ENCODE measurements at regions of chr6 and their contacts with region 1.

Region 1: GRCh38 chr6:15911753-15912504 is 217.0 kb upstream of the MYLIP start:
- DNase-seq: no peak
- H3K4me3 Mint-ChIP-seq: peak overlapping the region; percentile 56
- H3K27ac Mint-ChIP-seq: peak overlapping the region; percentile 89
- H3K4me1 Mint-ChIP-seq: peaks cover 67% of the 10 kb centered on the region
- H3K27me3 Mint-ChIP-seq: no peaks in the 10 kb centered on the region

Region 2: DNA sequence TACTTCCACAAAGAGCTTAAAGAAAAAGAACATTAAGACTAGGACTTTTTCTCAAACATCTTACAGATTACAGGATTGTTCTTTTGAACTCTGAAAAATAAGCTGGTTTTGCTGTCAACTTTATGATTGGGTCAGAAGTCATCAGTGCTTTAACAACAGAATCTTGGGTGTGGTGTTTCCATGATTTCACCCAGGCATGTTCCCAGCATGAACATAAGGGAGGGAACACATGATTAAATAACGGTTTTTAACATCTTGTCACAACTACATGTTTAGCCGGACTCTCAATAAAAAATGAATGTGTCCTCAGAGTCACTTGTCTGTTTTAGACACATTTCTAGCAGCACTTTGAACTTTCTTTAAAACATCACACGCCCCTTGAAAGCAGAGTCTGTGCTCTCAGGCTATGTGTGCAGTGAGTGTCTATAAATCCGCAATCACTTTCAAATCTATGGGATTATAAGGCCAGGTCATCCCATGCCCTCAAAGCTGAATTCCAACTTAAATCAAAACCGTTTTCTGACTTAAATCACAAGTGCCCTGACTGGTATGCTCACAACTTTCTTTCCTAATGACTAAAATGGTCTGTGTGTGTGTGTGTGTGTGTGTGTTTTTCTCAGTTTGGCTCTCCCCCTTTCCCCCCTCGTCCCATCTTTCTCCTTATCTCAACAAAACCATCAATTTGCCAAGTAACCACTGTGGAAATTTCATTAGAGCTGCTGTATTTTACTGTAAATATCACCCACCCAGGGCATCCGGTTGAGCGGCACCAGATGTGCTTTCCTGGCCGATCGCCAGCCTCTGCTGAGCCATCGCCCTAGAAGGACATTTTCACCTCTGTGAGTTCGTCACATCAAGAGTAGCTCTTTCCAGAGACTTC is 32.3 kb before region 1 on chr6:
- intact Hi-C with region 1: loop called (anchors 1 kb)
- DNase-seq: peak; percentile 29
- H3K4me3 Mint-ChIP-seq: no peak overlapping the region
- H3K27ac Mint-ChIP-seq: peak overlapping the region; percentile 68
- H3K4me1 Mint-ChIP-seq: peaks cover 49% of the 10 kb centered on the region
- H3K27me3 Mint-ChIP-seq: no peaks in the 10 kb centered on the region

Region 3: DNA sequence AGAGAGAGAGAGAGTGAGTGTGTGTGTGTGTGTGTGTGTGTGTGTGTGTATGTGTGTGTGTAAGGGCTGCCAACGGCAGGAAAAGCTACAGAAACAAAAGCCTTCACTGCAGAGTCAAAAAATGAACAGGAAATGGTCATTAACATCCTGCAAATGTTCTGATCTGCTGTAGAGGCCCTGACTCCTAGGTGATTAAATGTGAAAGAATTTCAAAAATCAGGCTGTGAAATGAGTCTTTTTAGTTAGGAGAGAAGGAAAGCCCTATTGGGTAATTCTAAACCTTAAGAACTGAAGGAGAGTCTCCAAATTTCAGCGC is 50.5 kb after region 1 on chr6:
- intact Hi-C with region 1: loop called (anchors 2 kb)
- DNase-seq: peak; percentile 39
- H3K4me3 Mint-ChIP-seq: no peak overlapping the region
- H3K27ac Mint-ChIP-seq: peak overlapping the region; percentile 86
- H3K4me1 Mint-ChIP-seq: peaks cover 32% of the 10 kb centered on the region
- H3K27me3 Mint-ChIP-seq: no peaks in the 10 kb centered on the region

Region 4: DNA sequence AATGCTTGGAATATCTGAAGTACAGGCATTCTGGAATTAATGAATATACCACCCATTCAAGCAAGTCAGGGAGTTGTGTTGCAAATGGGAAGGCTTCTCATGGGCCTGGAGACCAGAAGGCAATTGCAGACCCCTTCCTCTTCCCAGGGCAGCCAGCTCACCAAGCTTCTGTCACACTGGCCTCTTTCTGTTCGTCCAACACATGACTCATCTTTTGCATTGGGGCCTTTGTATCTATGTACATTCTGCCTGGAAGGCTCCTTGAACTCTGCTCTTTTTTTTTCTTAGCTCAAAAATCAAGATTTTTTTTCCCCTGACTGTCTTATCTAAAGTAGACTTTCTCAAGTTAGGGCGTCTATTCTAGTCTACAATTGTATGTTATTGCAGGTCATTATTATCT is 84.1 kb after region 1 on chr6:
- intact Hi-C with region 1: loop called (anchors 1 kb)
- DNase-seq: no peak
- H3K4me3 Mint-ChIP-seq: no peak overlapping the region
- H3K27ac Mint-ChIP-seq: peak overlapping the region; percentile 55
- H3K4me1 Mint-ChIP-seq: peaks cover 24% of the 10 kb centered on the region
- H3K27me3 Mint-ChIP-seq: no peaks in the 10 kb centered on the region

Region 5: GRCh38 chr6:16097382-16098171 is 185.6 kb after region 1 on chr6:
- intact Hi-C with region 1: no loop called
- DNase-seq: no peak
- H3K4me3 Mint-ChIP-seq: no peak overlapping the region
- H3K27ac Mint-ChIP-seq: no peak overlapping the region
- H3K4me1 Mint-ChIP-seq: peaks cover 14% of the 10 kb centered on the region
- H3K27me3 Mint-ChIP-seq: no peaks in the 10 kb centered on the region

Region 6: DNA sequence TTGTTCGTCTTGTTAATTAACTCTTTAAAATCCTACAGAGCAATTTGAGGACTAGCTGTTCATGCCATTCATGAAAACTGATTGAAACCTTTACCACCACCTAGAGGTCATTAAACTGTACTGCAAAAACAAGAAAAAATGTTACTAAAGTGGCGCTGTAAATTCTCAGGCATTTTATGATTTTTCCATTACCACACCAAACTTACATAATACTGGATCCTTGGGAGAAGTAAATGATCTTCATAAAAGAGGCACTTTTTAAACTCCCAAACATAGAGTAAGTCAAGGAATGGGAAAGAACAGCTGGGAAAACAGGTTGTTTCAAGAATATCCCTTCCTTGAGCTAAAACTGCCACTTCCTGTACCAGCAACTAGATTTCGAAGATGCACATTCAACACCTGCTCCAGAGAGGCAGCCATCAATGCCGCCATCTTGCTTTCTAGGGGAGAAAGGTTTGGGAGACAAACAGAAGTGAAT is 271.3 kb after region 1 on chr6:
- intact Hi-C with region 1: loop called (anchors 5 kb)
- DNase-seq: no peak
- H3K4me3 Mint-ChIP-seq: no peak overlapping the region
- H3K27ac Mint-ChIP-seq: peak overlapping the region; percentile 37
- H3K4me1 Mint-ChIP-seq: peaks cover 28% of the 10 kb centered on the region
- H3K27me3 Mint-ChIP-seq: peaks cover 11% of the 10 kb centered on the region